ENCODE measurements at regions of chr7 and their contacts with region 1.

Region 1: DNA sequence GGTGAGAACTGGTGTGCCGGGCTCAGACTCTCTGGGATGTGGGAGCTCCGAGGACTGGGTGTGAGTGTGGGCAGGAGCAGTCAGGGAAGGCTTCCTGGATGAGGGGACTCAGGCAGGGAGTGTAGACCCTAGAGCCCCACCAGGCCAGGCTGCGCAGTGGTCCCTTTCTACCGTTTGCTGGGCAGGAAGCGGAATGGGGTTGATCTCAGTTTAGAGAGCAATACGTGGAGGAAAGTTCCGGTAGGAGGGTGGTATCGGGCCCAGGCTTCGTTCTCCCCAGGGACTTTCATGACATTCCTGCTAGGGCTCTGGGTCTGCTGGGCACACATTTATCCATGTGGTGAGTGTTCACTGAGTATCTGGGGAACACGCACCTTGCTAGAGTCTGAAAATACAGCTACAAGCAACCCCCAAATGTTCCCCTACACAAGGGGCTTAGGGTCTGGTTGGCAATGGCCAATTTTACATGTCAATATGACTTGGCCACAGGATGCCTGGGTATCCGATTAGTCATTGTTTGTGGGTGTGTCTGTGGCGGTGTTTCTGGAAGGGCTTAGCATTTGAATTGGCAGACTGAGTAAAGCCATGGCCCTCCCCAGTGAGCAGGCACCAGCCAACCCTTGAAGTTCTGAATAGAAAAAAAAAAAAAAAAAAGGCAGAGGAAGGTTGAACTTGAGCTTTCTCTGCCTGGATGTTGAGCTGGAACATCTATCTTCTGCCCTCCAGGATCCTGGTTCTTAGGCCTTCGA is 20.8 kb downstream of the GHRHR start:
- DNase-seq: peak; percentile 72
- H3K4me3 ChIP-seq: no peak overlapping the region
- H3K27ac ChIP-seq: no peak overlapping the region
- H3K4me1 ChIP-seq: no peaks in the 10 kb centered on the region
- H3K27me3 ChIP-seq: peaks cover 27% of the 10 kb centered on the region

Region 2: GRCh38 chr7:31114593-31115343 is 130.2 kb after region 1 on chr7:
- in situ Hi-C with region 1: loop called (anchors 5 kb)
- DNase-seq: peak; percentile 65
- H3K4me3 ChIP-seq: no peak overlapping the region
- H3K27ac ChIP-seq: no peak overlapping the region
- H3K4me1 ChIP-seq: no peaks in the 10 kb centered on the region
- H3K27me3 ChIP-seq: 0 out of 2 replicates have a peak, but pooled peaks cover 10% of the 10 kb centered on the region

Region 3: DNA sequence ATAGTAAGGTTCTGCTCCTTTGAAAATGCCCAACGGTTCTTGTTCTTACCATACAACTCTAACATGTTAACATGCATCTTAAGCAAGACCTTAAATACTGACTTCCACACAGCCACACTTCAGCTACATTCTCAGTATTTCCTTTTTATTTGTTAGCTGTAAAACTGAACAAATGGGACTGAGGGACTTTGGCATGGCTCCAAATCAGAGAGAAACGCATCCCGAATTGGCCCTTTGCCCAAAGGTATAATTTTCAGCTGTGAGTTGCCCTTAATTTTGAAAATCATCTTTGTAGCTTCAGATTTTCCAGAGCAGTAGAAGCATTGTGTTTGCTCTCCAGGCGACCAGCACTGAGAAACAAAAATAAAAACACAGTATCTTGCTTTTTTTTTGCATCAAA is 299.6 kb after region 1 on chr7:
- in situ Hi-C with region 1: no loop called
- DNase-seq: no peak
- H3K4me3 ChIP-seq: no peak overlapping the region
- H3K27ac ChIP-seq: no peak overlapping the region
- H3K4me1 ChIP-seq: no peaks in the 10 kb centered on the region
- H3K27me3 ChIP-seq: no peaks in the 10 kb centered on the region

Measured in GM23248 (cell line).